Activated naive CD4-positive, alpha-beta T cell treated with anti-CD3 and anti-CD28 coated beads for 36 hours (primary cell): ENCODE measurements at regions of chr7 and their contacts with region 1.

Region 1: DNA sequence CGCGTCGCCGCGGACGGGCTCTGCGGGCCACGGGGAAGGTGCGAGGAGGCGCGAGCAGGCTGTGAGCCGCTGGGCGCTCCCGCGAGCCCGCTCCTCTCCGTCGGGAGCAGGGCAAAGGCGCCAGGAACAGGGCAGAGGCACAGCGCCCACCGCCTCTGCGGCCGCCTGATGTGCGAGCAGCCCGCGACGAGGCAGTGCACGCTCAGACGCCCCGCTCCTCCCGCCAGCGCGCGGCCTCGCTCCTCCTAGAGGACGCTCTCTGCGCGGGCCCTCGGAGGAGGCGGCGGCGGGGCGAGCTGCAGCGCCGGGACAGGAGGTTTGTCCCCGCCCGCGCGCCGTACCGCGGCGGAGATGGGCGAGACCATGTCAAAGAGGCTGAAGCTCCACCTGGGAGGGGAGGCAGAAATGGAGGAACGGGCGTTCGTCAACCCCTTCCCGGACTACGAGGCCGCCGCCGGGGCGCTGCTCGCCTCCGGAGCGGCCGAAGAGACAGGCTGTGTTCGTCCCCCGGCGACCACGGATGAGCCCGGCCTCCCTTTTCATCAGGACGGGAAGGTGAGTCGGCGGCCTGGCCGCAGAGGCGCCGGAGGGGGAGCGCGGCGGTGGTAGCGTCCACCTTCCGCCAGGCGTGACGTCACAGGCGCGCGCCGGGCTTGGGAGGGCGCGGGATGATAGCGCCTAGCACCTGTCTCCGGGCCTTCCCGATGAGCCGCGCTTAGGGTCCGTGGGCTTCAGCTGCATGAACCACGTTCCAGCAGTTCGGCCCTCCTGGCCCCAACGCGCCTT is 731 bp downstream of the LANCL2 start:
- DNase-seq: peak; percentile 93
- H3K4me3 Mint-ChIP-seq: peak overlapping the region; percentile 92
- H3K27ac Mint-ChIP-seq: peak overlapping the region; percentile 96
- H3K4me1 Mint-ChIP-seq: peaks cover 8% of the 10 kb centered on the region
- H3K27me3 Mint-ChIP-seq: no peaks in the 10 kb centered on the region

Region 2: GRCh38 chr7:54758702-54759592 is 606.9 kb before region 1 on chr7 and contains the start of gene SEC61G:
- CTCF ChIA-PET with region 1: no interaction called
- intact Hi-C with region 1: loop called (anchors 1 kb)
- DNase-seq: peak; percentile 97
- H3K4me3 Mint-ChIP-seq: peak within 1 kb of the TSS; percentile 100
- H3K27ac Mint-ChIP-seq: peak within 1 kb of the TSS; percentile 92
- H3K4me1 Mint-ChIP-seq: peaks cover 18% of the 10 kb centered on the region
- H3K27me3 Mint-ChIP-seq: peaks cover 2% of the 10 kb centered on the region
- total RNA-seq, gene SEC61G: 121 to 126 TPM

Region 3: DNA sequence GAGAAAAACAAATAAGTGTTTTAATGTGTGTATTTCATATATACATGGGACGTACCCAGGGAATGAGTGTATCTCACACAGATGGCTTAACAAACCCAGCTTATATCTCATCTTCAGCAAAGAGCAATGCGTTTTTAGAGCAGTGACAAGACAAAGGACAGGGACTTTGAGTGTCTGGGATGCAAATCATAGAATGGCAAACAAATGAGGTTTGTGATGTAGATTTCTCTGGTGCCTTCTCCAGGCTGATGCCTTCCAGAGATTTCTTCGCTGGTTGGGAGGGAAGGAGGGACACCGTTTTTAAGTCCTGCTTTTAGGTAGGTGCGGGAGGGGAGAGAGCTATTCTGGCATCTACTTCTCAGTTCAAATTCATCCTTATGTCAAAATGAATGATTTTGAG is 15.8 kb after region 1 on chr7:
- CTCF ChIA-PET with region 1: no interaction called
- intact Hi-C with region 1: no loop called
- DNase-seq: no peak
- H3K4me3 Mint-ChIP-seq: no peak overlapping the region
- H3K27ac Mint-ChIP-seq: no peak overlapping the region
- H3K4me1 Mint-ChIP-seq: peaks cover 2% of the 10 kb centered on the region
- H3K27me3 Mint-ChIP-seq: no peaks in the 10 kb centered on the region

Region 4: GRCh38 chr7:55415173-55415778 is 49.4 kb after region 1 on chr7:
- CTCF ChIA-PET with region 1: interaction called, 5 read pairs
- intact Hi-C with region 1: loop called (anchors 1 kb)
- DNase-seq: peak; percentile 92
- H3K4me3 Mint-ChIP-seq: no peak overlapping the region
- H3K27ac Mint-ChIP-seq: no peak overlapping the region
- H3K4me1 Mint-ChIP-seq: peaks cover 2% of the 10 kb centered on the region
- H3K27me3 Mint-ChIP-seq: no peaks in the 10 kb centered on the region

Region 5: GRCh38 chr7:55534175-55534915 is 168.5 kb after region 1 on chr7:
- CTCF ChIA-PET with region 1: no interaction called
- intact Hi-C with region 1: loop called (anchors 1 kb)
- DNase-seq: peak; percentile 93
- H3K4me3 Mint-ChIP-seq: peak overlapping the region; percentile 67
- H3K27ac Mint-ChIP-seq: peak overlapping the region; percentile 97
- H3K4me1 Mint-ChIP-seq: peaks cover 97% of the 10 kb centered on the region
- H3K27me3 Mint-ChIP-seq: no peaks in the 10 kb centered on the region

Region 6: GRCh38 chr7:55641273-55641691 is 275.4 kb after region 1 on chr7:
- CTCF ChIA-PET with region 1: no interaction called
- intact Hi-C with region 1: loop called (anchors 1 kb)
- DNase-seq: peak; percentile 46
- H3K4me3 Mint-ChIP-seq: no peak overlapping the region
- H3K27ac Mint-ChIP-seq: no peak overlapping the region
- H3K4me1 Mint-ChIP-seq: peaks cover 7% of the 10 kb centered on the region
- H3K27me3 Mint-ChIP-seq: no peaks in the 10 kb centered on the region

Region 7: DNA sequence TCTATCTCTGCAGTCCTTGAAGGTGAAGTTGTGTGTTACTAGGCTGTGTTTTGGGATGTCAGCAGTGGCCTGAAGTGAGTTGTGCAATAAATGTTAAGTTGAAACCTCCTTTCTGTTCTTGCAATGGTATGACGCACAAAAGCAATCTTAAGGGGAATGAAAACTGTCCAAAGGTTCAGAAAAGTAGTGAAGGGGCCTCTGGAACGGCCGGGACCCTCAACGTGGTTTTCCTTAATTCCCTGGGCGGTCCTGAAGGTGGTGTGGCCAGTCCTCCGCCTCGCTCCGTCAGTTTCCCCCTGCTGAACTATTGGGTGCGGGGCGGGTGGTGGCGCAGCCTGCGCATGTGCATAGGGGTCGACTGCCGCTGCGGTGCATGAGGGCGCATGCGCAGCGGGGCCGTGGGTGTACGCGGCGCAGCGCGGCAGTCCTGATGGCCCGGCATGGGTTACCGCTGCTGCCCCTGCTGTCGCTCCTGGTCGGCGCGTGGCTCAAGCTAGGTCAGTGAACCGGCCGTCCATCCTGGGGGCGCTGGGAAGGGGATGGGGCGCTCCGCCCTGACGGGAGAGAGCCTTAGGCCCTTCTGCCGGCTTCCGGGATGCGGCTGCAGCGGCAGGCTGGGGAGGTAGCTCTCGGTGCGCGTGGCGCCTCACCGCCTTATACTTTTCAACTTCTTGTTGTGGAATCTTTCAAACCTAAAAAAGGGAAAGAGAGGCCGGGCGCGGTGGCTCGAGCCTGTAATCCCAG is 698.2 kb after region 1 on chr7 and contains the start of gene SUMF2:
- CTCF ChIA-PET with region 1: no interaction called
- intact Hi-C with region 1: loop called (anchors 1 kb)
- DNase-seq: peak; percentile 90
- H3K4me3 Mint-ChIP-seq: peak within 1 kb of the TSS; percentile 88
- H3K27ac Mint-ChIP-seq: peak within 1 kb of the TSS; percentile 91
- H3K4me1 Mint-ChIP-seq: peaks cover 41% of the 10 kb centered on the region
- H3K27me3 Mint-ChIP-seq: no peaks in the 10 kb centered on the region
- total RNA-seq, gene SUMF2: 143 to 159 TPM